ENCODE measurements at regions of chr6 and their contacts with region 1.

Region 1: GRCh38 chr6:34392497-34393190 is at the start of gene NUDT3:
- DNase-seq: peak; percentile 93
- ATAC-seq: peak; percentile 92
- H3K4me3 ChIP-seq: peak within 1 kb of the TSS; percentile 93
- H3K27ac ChIP-seq: peak within 1 kb of the TSS; percentile 94
- H3K4me1 ChIP-seq: no peaks in the 10 kb centered on the region
- H3K27me3 ChIP-seq: no peaks in the 10 kb centered on the region
- CTCF ChIP-seq: peak; percentile 86
- POLR2A ChIP-seq: no peak
- RAD21 ChIP-seq: peak; percentile 80
- total RNA-seq, gene NUDT3: 17.2 and 21.4 TPM in 2 replicates

Region 2: DNA sequence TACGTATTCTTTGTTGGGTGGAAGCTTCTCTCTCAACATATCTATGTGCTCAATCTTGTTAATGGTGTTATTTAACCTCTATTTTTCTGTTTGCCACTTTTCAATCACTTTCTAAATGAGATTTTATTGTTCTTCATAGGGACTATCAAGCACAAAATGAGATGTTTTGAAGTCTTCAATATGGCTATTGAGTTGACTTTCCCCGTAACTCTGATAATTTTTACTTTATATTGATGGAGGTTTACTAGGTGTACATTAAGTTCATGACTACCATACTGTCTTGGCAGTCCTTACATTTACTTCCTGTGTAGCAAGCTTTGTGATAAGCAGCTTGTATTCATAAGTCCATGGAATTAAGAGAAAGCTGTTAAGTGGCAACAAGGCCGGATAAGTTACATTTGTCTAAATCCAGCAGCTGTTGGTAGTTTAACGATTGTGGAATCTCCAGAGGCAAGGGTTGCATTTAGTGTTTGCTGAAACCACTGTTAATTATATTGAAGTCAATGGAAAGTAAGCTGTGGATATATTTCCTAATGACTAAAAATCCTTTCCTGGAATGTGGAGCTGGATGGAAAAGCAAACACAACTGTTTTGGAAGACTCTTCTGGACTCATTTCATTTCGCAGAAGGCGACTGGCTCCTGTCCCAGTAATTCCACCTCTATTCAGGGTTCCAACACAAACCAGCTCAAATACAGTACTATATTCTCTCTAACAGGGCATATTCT is 86.5 kb before region 1 on chr6:
- CTCF ChIA-PET with region 1: no interaction called
- POLR2A ChIA-PET with region 1: no interaction called
- dilution Hi-C with region 1: no loop called
- in situ Hi-C with region 1: no loop called
- intact Hi-C with region 1: loop called (anchors 5 kb)
- DNase-seq: peak; percentile 22
- ATAC-seq: peak; percentile 45
- H3K4me3 ChIP-seq: no peak overlapping the region
- H3K27ac ChIP-seq: no peak overlapping the region
- H3K4me1 ChIP-seq: peaks cover 6% of the 10 kb centered on the region
- H3K27me3 ChIP-seq: no peaks in the 10 kb centered on the region
- CTCF ChIP-seq: no peak
- POLR2A ChIP-seq: no peak
- RAD21 ChIP-seq: no peak

Region 3: DNA sequence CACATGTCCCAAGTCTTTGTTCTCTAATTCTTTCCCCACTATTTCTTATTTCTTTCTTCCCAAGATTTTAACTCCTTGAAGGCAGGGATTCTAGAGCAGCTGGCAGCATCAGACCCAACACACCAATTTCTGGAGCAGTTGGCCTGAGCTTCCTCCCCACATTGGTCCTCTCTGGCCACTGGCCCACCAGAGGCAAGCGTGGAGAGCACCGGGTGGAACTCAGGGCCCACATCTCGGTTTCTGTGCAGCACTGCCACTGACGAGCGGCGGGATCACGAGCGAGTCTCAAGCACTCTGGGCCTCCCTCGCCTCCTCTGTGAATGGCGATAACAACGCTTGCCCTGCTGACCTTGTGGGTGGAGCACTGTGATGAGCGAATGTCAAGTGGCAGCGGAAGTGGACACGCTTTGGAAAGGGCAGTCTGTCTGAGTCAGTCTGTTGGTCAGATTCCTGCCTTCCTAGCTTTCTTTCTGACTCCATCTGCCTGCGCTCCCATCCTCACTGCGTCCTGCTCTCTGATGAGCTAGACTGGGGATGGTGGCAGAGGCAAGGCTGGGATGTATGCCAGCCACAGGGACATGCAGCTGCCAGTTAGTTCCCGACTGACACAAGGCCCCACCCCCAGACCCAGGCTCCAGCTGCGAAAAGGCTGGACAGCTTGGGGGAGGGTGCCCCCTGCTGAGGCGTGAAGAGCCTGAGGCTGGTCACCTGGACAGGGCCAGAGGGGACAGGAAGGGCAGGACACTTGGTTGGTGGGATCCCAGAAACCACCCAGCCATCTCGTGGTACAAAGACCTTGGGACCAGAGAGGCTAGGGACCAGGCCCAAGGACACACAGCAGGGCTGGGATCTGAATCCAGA is 168.0 kb after region 1 on chr6:
- CTCF ChIA-PET with region 1: no interaction called
- POLR2A ChIA-PET with region 1: no interaction called
- dilution Hi-C with region 1: no loop called
- in situ Hi-C with region 1: no loop called
- intact Hi-C with region 1: no loop called
- DNase-seq: peak; percentile 75
- ATAC-seq: peak; percentile 86
- H3K4me3 ChIP-seq: no peak overlapping the region
- H3K27ac ChIP-seq: no peak overlapping the region
- H3K4me1 ChIP-seq: peaks cover 6% of the 10 kb centered on the region
- H3K27me3 ChIP-seq: peaks cover under 1% of the 10 kb centered on the region; the same call in 1 of the 2 replicates
- CTCF ChIP-seq: no peak
- POLR2A ChIP-seq: no peak
- RAD21 ChIP-seq: no peak

Region 4: GRCh38 chr6:34656378-34657036 is 263.9 kb after region 1 on chr6:
- CTCF ChIA-PET with region 1: no interaction called
- POLR2A ChIA-PET with region 1: no interaction called
- dilution Hi-C with region 1: no loop called
- in situ Hi-C with region 1: no loop called
- intact Hi-C with region 1: no loop called
- DNase-seq: peak; percentile 90
- ATAC-seq: peak; percentile 73
- H3K4me3 ChIP-seq: peak overlapping the region; percentile 58; the same call in 1 of the 2 replicates
- H3K27ac ChIP-seq: peak overlapping the region; percentile 89
- H3K4me1 ChIP-seq: peaks cover 12% of the 10 kb centered on the region
- H3K27me3 ChIP-seq: no peaks in the 10 kb centered on the region
- CTCF ChIP-seq: no peak
- POLR2A ChIP-seq: no peak
- RAD21 ChIP-seq: no peak